Mammary epithelial cell (primary cell): ENCODE measurements at regions of chr15 and their contacts with region 1.

Region 1: DNA sequence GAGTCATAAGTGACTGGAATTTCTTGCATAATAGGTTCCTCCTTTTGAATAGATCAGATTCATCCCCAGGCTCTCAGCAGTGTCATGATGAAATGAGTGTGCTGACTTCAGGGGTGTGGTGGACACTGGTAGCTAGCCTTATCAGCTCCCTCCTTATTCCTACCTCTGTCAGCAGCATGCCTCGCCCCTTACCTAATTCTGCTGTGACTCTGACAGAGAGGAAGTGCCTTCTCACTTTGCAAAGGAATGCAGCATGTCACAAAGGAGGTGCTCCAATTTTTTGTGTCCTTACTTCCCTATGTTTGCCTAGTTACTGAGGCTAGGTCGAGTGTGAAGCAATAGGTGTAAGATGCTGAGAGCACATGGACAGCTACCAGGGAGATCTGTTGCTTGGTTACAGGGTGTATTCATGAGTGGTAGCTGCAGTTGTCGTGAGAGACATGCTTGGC is 90.6 kb downstream of the TNFAIP8L3 start:
- DNase-seq: peak; percentile 80
- H3K4me3 ChIP-seq: no peak overlapping the region
- H3K27ac ChIP-seq: peak overlapping the region; percentile 76
- H3K4me1 ChIP-seq: peaks cover 5% of the 10 kb centered on the region
- H3K27me3 ChIP-seq: no peaks in the 10 kb centered on the region
- CTCF ChIP-seq: no peak

Region 2: DNA sequence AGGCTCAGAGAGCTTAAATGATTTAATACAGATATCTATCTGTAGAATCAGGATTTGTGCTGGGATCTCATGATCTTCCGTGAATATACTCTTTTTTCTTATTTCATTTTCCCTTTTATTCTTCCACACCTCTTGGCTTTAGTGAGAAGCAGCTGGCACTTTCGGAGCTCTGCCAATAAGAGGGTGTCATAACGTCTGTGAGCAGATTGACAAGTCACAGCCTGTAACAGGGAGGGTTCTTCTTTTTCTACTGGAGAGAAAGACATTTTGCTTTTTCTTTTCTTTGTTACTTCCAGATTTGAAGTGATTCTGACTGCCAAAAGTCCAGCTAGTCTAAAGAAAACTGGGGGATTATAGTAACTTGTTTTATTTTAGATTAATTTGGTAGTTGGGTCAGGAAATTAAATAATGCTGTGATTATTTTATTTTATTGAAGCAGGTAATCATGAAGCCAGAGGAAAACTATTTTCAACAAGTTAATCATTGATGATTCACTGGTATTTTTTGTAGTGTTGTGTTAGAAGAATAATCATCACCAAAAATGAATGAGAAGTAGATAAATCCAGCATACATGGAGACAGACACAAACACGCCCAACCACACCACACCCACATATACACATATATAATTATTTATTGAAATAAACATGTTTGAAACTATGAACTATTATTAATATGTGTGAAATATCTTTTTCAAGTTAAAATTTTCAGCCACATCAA is 20.8 kb after region 1 on chr15:
- CTCF ChIA-PET with region 1: no interaction called
- dilution Hi-C with region 1: no loop called
- in situ Hi-C with region 1: no loop called
- intact Hi-C with region 1: loop called (anchors 1 kb)
- DNase-seq: peak; percentile 91
- H3K4me3 ChIP-seq: peak overlapping the region; percentile 24 to 43 (median 29)
- H3K27ac ChIP-seq: peak overlapping the region; percentile 99
- H3K4me1 ChIP-seq: peaks cover 20% of the 10 kb centered on the region
- H3K27me3 ChIP-seq: no peaks in the 10 kb centered on the region
- CTCF ChIP-seq: no peak

Region 3: DNA sequence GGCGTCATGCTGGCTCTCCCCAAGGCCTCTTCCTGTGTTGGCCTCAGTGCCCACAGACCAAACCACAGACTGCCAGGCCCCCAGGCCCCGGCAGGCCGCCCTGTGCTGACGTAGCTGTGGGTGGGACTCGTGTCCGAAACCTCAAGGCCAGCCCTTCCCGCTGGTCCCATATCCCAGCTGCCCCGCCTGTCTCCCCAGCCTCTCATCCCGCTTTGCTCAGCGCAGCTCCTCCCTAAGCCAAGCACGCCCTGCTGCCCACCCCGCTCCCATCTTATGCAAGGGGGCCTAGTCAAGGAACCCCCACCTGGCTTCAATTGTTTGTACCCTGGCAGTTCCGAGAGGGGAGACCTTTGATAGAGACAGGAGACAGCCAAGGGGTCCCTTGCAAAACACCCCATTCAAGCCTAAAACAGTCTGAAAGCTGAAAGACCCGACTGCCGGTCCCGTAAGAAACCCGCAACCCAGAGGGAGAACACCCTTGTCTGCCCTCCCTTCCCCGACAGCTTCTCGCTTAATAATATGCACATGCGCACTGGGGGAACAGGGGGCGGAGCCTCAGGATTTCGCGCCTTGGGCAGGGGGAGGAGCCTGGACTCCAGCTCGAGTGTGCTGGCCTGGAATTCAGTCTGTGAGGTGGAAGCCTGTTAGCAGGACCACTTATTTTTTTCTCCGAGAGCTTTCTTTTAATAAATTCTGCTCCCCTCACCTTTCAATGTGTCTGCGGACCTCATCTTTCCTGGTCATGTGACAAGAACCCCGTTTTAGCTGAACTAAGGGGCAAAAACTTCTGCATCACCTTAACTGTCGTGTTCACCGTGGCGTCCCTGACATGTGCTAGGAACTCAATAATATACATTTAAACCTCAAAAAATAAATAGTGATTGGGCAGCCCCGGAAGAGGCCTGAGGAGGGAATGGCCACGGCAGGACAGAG is 73.4 kb after region 1 on chr15:
- CTCF ChIA-PET with region 1: no interaction called
- dilution Hi-C with region 1: no loop called
- in situ Hi-C with region 1: no loop called
- intact Hi-C with region 1: no loop called
- DNase-seq: no peak
- H3K4me3 ChIP-seq: no peak overlapping the region
- H3K27ac ChIP-seq: no peak overlapping the region
- H3K4me1 ChIP-seq: peaks cover 25% of the 10 kb centered on the region
- H3K27me3 ChIP-seq: no peaks in the 10 kb centered on the region
- CTCF ChIP-seq: no peak

Region 4: GRCh38 chr15:51100785-51101509 is 96.8 kb after region 1 on chr15:
- CTCF ChIA-PET with region 1: interaction called, 14 read pairs
- dilution Hi-C with region 1: no loop called
- in situ Hi-C with region 1: no loop called
- intact Hi-C with region 1: no loop called
- DNase-seq: no peak
- H3K4me3 ChIP-seq: no peak overlapping the region
- H3K27ac ChIP-seq: no peak overlapping the region
- H3K4me1 ChIP-seq: peaks cover 21% of the 10 kb centered on the region
- H3K27me3 ChIP-seq: no peaks in the 10 kb centered on the region
- CTCF ChIP-seq: no peak

Region 5: GRCh38 chr15:51121118-51121517 is 117.0 kb after region 1 on chr15:
- CTCF ChIA-PET with region 1: no interaction called
- dilution Hi-C with region 1: no loop called
- in situ Hi-C with region 1: no loop called
- intact Hi-C with region 1: loop called (anchors 5 kb)
- DNase-seq: peak; percentile 96
- H3K4me3 ChIP-seq: no peak overlapping the region
- H3K27ac ChIP-seq: peak overlapping the region; percentile 55
- H3K4me1 ChIP-seq: peaks cover 16% of the 10 kb centered on the region
- H3K27me3 ChIP-seq: no peaks in the 10 kb centered on the region
- CTCF ChIP-seq: peak in 1 of 2 donors; percentile 10